ENCODE measurements at regions of chr5 and their contacts with region 1.

Region 1: DNA sequence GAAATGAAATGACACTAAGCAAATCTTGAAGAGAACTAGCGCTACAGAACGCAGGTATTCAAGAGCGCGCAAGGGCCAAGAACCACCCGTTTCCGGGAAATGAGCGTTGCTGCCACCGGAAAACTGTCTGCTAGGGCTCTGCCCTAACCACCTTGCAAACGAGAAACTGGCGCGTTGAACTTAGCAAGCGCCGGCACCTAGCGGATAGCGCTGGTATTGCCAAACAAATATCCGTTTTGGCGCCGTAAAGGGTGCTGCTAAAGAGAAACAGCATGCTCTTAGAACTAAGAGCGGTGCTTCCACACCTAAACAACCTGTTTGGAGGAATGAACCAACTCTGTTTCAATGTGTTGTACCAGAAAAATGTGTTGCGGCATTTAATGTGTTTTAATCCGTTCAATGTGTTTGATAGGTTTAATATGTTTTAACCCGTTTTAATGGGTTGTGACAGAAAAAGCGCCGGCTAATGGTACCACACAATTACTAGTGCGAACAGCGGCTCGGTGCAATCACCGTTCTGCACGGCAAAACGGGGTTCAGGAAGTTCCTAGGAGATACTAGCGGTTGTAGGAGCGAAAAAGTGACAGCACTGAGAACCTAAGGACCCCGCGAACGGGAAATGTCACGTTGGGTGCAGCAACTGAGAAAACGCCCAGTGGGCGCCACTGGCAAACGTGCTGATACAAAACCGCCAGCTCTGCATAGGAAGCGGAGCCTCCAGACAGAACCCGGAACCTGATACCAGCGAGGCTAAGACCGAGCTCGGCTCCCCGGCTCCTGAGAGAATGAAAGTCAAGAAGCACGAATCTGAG is at the start of gene ANXA2R:
- DNase-seq: peak; percentile 80 to 91
- ATAC-seq: peak; percentile 59 to 74 (median 66)
- H3K4me3 ChIP-seq: peak within 1 kb of the TSS; percentile 47 to 73 (median 67)
- H3K27ac ChIP-seq: peak within 1 kb of the TSS; percentile 93 to 98 (median 96)
- H3K4me1 ChIP-seq: peaks cover 0 to 75% (median 17%) of the 10 kb centered on the region in 9 donors
- H3K27me3 ChIP-seq: peaks cover 0 to 73% (median 35%) of the 10 kb centered on the region in 7 donors
- CTCF ChIP-seq: peak; percentile 64 to 87 (median 79)
- total RNA-seq, gene ANXA2R: 0.42 to 1.8 (median 0.87) TPM

Region 2: GRCh38 chr5:42404366-42404765 is 636.1 kb before region 1 on chr5:
- intact Hi-C with region 1: no loop called
- DNase-seq: no peak
- ATAC-seq: no peak
- H3K4me3 ChIP-seq: no peak overlapping the region
- H3K27ac ChIP-seq: no peak overlapping the region
- H3K4me1 ChIP-seq: peaks cover 0 to 6% (median 0%) of the 10 kb centered on the region in 9 donors
- H3K27me3 ChIP-seq: no peaks in the 10 kb centered on the region
- CTCF ChIP-seq: no peak

Region 3: DNA sequence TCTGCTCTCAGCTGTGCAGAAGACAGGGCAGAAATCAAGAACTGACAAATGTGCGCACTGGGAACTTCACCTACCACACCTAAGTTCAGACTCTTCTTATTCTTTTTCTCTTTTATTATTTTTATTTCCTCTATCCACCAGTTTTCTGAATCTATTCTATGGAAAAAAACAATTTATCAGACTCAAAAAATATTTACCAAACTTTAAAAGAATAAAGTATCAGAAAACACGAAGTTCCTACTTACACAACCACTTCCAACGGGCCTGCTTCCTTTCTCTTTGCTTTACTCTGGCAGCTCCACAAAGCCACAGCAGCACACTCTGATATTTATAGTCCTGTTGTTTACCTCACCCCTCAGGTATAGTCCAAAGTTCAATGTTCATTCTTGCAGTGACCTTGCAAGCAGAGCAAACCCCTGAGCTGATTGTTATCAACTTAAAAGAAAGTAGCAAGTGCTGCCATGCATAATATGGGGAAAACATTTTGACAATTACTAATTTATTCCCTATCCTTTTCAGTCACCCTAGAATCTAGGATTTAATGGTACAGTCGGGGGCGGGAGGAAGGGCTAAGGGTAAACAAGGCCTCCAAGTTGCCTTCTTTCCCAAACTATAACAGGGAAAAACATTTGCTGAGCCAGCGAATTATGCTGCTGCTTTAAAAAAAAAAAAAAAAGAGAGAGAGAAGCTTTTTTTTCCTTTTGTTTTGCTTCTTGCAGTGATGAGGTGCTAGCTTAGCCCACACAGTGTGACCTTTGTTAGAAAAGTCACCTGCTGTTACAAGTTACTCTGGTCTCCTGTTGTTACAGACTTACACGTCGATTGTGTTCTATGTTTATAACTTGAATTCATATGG is 228.7 kb before region 1 on chr5 and contains the start of gene SELENOP:
- intact Hi-C with region 1: loop called in 1 of 10 experiments (anchors 5 kb)
- DNase-seq: peak in 1 of 2 donors; percentile 84
- ATAC-seq: peak; percentile 92 to 97 (median 96)
- H3K4me3 ChIP-seq: peak within 1 kb of the TSS; percentile 38 to 67 (median 60)
- H3K27ac ChIP-seq: peak within 1 kb of the TSS; percentile 62 to 93 (median 84)
- H3K4me1 ChIP-seq: peaks cover 0 to 52% (median 35%) of the 10 kb centered on the region in 9 donors
- H3K27me3 ChIP-seq: no peaks in the 10 kb centered on the region
- CTCF ChIP-seq: no peak
- total RNA-seq, gene SELENOP: 149 to 373 (median 181) TPM

Region 4: DNA sequence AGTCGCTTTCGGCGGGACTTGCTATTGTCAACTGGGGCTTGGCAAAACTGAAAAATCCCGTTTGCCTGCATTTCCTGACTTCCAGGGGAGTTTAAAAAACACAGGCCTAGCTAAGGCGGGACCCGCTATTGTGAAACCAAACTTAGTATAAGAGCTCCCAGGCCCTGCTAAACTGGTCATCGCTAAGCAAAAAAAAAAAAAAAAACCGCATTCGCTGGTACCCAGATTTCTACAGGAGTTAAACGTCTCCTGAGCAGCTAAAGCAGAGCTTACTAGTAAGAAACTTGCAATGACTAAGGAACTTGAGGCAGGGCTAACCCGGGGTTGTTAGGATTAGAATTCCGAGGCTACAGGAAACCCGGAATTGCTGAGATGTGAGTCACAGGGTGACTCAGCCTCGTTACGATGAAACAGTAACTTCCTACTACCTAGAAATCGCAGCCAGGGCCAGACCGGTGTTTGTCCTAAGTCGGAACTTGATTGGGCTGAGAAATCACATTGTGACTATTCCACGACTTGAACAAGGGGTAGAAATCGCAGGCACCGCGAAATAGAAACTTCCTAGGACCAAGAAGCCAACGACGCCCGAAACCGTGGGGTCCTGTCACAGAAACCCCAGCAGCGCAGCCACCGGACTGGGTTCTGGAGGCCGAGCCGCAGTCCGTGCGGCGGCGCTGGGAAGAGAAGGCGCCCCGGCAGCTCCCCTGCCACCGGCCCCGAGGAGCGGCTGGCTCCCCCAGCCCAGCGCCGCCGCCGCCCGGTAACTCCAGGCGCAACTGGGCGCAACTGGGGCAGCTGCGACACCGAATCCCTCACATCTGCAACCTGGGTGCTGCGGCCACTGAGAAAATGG is 89.8 kb before region 1 on chr5:
- intact Hi-C with region 1: loop called in 6 of 10 experiments (anchors 2 to 5 kb)
- DNase-seq: peak; percentile 29 to 81
- ATAC-seq: peak; percentile 82 to 92 (median 86)
- H3K4me3 ChIP-seq: peak overlapping the region; percentile 32 to 74 (median 60)
- H3K27ac ChIP-seq: peak overlapping the region; percentile 78 to 99 (median 94)
- H3K4me1 ChIP-seq: peaks cover 0 to 50% (median 25%) of the 10 kb centered on the region in 9 donors
- H3K27me3 ChIP-seq: peaks cover 12 to 99% (median 89%) of the 10 kb centered on the region in 7 donors
- CTCF ChIP-seq: no peak

Region 5: DNA sequence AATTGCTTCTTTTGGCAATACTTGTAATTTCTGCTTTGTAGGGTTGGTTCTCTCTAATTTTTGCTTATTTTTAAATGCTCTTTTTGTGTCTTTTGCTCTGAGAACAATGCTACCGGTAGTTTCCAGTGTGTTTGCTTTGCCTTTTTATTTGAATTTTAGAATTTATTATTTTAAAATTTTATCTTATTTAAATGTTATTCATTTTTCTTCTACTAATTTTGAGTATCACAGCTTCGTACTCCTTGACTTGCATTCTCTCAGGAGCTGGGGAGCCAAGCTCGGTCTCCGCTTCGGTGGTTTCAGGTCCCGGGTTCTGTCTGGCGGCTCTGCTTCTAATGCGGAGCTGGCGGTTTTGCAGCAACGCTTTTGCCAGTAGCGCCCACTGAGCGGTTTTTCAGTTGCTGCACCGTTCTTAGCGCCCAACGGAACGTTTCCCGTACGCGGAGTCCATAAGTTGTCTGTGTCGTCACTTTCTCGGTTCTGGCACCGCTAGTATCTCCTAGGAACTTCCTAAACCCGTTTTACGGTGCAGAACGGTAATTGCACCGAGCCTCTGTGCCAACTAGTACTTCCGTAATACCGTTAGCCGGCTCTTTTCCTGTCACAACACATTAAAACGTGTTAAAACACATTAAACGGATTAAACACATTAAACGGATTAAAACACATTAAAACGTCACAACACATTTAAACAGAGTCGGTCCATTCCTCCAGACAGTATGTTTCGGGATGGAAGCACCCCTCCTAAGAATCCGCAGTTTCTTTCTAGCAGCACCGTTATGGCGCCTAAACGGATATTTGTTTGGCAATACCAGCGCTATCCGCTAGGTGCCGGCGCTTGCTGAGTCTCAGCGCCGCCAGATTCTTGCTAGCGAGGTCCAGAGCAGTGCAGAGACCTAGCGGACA is 46.0 kb before region 1 on chr5:
- intact Hi-C with region 1: loop called (anchors 1 to 10 kb)
- DNase-seq: peak; percentile 80 to 93
- ATAC-seq: peak; percentile 62 to 84 (median 80)
- H3K4me3 ChIP-seq: peak overlapping the region; percentile 53 to 76 (median 64)
- H3K27ac ChIP-seq: peak overlapping the region; percentile 66 to 100 (median 96)
- H3K4me1 ChIP-seq: peaks cover 0 to 63% (median 16%) of the 10 kb centered on the region in 9 donors
- H3K27me3 ChIP-seq: peaks cover 0 to 100% (median 91%) of the 10 kb centered on the region in 7 donors
- CTCF ChIP-seq: peak; percentile 69 to 90 (median 86)

Region 6: GRCh38 chr5:43008369-43009153 is 31.9 kb before region 1 on chr5:
- intact Hi-C with region 1: loop called in 4 of 10 experiments (anchors 2 to 5 kb)
- DNase-seq: peak; percentile 85 to 92
- ATAC-seq: peak; percentile 81 to 93 (median 88)
- H3K4me3 ChIP-seq: peak overlapping the region; percentile 34 to 67 (median 55)
- H3K27ac ChIP-seq: peak overlapping the region; percentile 72 to 97 (median 90)
- H3K4me1 ChIP-seq: peaks cover 0 to 43% (median 10%) of the 10 kb centered on the region in 9 donors
- H3K27me3 ChIP-seq: peaks cover 0 to 74% (median 57%) of the 10 kb centered on the region in 7 donors
- CTCF ChIP-seq: peak in 1 of 9 donors; percentile 17

Region 7: DNA sequence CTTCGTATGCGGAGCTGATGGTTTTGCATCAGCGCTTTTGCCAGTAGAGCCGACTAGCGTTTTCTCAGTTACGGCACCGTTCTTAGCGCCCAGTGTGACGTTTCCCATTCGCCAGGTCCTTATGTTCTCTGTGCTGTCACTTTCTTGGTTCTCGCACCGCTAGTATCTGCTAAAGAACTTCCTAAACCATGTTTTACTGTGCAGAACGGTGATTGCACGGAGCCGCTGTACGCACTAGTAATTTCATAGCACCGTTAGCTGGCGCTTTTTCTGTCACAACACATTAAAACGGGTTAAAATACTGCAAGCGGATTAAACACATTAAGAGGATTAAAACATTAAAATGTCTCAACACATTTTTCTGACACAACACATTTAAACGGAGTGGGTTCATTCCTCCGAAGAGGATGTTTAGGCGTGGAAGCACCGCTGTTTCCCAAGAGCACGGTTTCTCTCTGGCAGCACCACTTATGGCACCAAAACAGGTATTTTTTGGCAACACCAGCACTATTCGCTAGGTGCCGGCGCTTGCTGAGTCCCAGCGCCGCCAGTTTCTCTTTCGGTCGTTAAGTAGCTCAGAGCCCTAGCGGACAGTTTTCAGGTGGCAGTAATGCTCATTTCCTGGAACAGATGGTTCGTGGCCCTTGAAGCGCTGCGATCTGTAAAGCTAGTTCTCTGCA is 20.7 kb before region 1 on chr5:
- intact Hi-C with region 1: loop called in 4 of 10 experiments (anchors 1 to 2 kb)
- DNase-seq: peak; percentile 40 to 71
- ATAC-seq: peak; percentile 35 to 53 (median 46)
- H3K4me3 ChIP-seq: peak overlapping the region; percentile 36 to 69 (median 58)
- H3K27ac ChIP-seq: peak overlapping the region; percentile 62 to 97 (median 95)
- H3K4me1 ChIP-seq: peaks cover 0 to 42% (median 17%) of the 10 kb centered on the region in 9 donors
- H3K27me3 ChIP-seq: peaks cover 0 to 87% (median 55%) of the 10 kb centered on the region in 7 donors
- CTCF ChIP-seq: peak in 8 of 9 donors; percentile 18 to 56 (median 47)

Measured in heart right ventricle (tissue), 16 donors.